ENCODE measurements at regions of chr17 and their contacts with region 1.

Region 1: DNA sequence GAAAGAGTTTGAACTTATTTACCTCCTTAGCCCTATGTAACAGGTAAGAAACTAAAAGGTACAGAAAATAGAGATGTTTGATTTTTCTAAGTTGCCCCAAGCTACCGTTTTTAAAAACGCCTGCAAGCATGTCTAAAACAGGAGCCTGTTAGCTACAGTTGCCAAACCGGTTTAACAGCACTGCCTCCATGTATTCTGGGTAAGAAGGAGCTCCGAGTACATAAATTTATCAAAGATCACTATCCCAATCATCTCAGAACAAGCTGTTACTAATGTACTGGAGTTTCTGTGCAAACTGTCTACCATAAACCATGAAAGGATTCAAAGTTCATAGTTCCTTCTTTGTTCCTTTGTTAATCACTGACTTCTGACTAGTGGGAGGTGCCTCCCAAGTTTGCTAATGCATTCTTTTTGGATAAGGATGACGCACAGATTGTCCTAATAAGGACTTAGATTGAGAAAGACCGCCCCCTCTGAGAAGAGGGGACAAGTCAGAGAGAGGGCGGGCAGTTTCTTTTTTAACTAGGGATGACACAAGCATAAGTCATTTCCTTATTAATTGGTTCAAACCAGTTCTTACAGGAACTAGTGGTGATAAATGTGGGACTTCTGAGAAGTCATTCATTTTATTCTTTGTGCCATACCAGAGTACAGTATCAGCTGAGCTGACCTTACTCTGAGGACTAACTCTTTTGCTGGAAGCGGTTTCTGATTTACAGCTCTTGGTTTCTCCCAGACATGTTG is 55.3 kb downstream of the TUBD1 start:
- DNase-seq: peak in 31 of 35 experiments; percentile 14 to 90 (median 61)
- ATAC-seq: peak; percentile 87 to 93 (median 92)
- H3K4me3 ChIP-seq: peak overlapping the region in 1 of 2 donors; percentile 69
- H3K4me3 Mint-ChIP-seq: peak overlapping the region; percentile 98 to 100 (median 99)
- H3K27ac ChIP-seq: peak overlapping the region; percentile 87
- H3K27ac Mint-ChIP-seq: peak overlapping the region; percentile 99 to 100
- H3K4me1 ChIP-seq: peaks cover 0 to 16% of the 10 kb centered on the region in 2 experiments
- H3K4me1 Mint-ChIP-seq: peaks cover 56 to 58% (median 57%) of the 10 kb centered on the region in 3 donors
- H3K27me3 ChIP-seq: no peaks in the 10 kb centered on the region
- H3K27me3 Mint-ChIP-seq: no peaks in the 10 kb centered on the region

Region 2: DNA sequence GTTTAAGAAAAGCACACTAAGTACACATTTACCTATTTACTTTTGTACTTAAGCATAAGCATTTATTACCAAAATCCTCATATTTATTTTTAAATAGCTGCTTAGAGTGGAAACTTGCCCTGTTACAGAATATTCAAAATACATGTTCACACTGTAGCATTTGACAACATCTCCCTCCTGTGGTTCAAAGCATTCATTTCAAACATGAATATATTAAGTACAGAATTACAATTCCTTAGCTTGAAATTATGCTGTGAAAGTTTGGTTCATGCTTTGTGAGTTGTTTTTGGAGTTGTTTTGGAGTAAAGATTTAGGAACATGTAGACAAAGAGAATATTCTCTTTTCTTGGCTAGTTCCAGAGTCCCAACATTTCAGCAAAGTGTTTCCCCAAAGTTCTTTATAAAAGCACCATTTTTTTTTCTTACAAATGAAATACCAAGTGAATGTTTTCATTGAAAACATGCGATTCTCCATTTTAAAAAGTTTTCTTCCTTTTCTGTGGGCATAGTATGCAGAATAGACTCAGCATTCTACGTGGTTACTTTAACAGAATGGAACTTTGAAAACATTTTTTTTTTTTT is 22.1 kb after region 1 on chr17:
- CTCF ChIA-PET with region 1: interaction called in 1 of 2 experiments, 7 read pairs
- POLR2A ChIA-PET with region 1: interaction called in 1 of 2 experiments, 13 read pairs
- DNase-seq: peak in 2 of 35 experiments; percentile 5 to 66
- ATAC-seq: peak; percentile 51 to 64 (median 58)
- H3K4me3 ChIP-seq: no peak overlapping the region
- H3K4me3 Mint-ChIP-seq: no peak overlapping the region
- H3K27ac ChIP-seq: no peak overlapping the region
- H3K27ac Mint-ChIP-seq: peak overlapping the region; percentile 61 to 75
- H3K4me1 ChIP-seq: no peaks in the 10 kb centered on the region
- H3K4me1 Mint-ChIP-seq: peaks cover 0 to 18% (median 6%) of the 10 kb centered on the region in 3 donors
- H3K27me3 ChIP-seq: no peaks in the 10 kb centered on the region
- H3K27me3 Mint-ChIP-seq: no peaks in the 10 kb centered on the region

Region 3: DNA sequence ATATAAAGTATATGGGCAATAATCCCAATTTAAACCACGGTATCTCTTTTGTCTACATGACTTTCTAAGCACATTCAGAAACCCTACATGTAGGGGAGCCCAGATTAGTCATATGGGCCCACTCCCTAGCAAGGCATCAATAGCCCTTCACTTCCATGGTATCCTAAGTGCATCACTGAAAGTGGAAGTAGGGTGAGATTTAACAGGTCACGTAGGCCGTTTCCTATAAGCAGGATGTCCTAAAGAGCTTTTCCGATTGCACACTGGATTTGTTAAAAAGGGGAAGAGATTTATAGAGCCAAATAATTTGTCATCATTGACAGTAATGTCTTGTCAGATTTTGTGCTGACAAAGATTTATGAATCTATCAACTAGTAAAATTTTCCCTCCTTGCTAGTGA is 351.3 kb after region 1 on chr17:
- CTCF ChIA-PET with region 1: no interaction called
- POLR2A ChIA-PET with region 1: no interaction called
- DNase-seq: no peak
- ATAC-seq: no peak
- H3K4me3 ChIP-seq: no peak overlapping the region
- H3K4me3 Mint-ChIP-seq: no peak overlapping the region
- H3K27ac ChIP-seq: no peak overlapping the region
- H3K27ac Mint-ChIP-seq: no peak overlapping the region
- H3K4me1 ChIP-seq: no peaks in the 10 kb centered on the region
- H3K4me1 Mint-ChIP-seq: no peaks in the 10 kb centered on the region
- H3K27me3 ChIP-seq: no peaks in the 10 kb centered on the region
- H3K27me3 Mint-ChIP-seq: no peaks in the 10 kb centered on the region

Region 4: GRCh38 chr17:61265397-61265796 is 1427.9 kb after region 1 on chr17:
- CTCF ChIA-PET with region 1: no interaction called
- POLR2A ChIA-PET with region 1: no interaction called
- DNase-seq: no peak
- ATAC-seq: no peak
- H3K4me3 ChIP-seq: no peak overlapping the region
- H3K4me3 Mint-ChIP-seq: no peak overlapping the region
- H3K27ac ChIP-seq: no peak overlapping the region
- H3K27ac Mint-ChIP-seq: no peak overlapping the region
- H3K4me1 ChIP-seq: no peaks in the 10 kb centered on the region
- H3K4me1 Mint-ChIP-seq: peaks cover 0 to 4% (median 0%) of the 10 kb centered on the region in 3 donors
- H3K27me3 ChIP-seq: no peaks in the 10 kb centered on the region
- H3K27me3 Mint-ChIP-seq: no peaks in the 10 kb centered on the region